Heart left ventricle (tissue), 16 donors: ENCODE measurements at regions of chr3 and their contacts with region 1.

Region 1: GRCh38 chr3:192444096-192444790 is 283.1 kb downstream of the FGF12 start:
- DNase-seq: peak; percentile 33 to 76 (median 44)
- ATAC-seq: peak; percentile 48 to 75 (median 72)
- H3K4me3 ChIP-seq: no peak overlapping the region
- H3K27ac ChIP-seq: no peak overlapping the region
- H3K4me1 ChIP-seq: peaks cover 0 to 26% (median 8%) of the 10 kb centered on the region in 12 donors
- H3K27me3 ChIP-seq: peaks cover 0 to 10% (median 0%) of the 10 kb centered on the region in 9 donors
- CTCF ChIP-seq: peak; percentile 95 to 100 (median 98)
- POLR2A ChIP-seq: no peak

Region 2: DNA sequence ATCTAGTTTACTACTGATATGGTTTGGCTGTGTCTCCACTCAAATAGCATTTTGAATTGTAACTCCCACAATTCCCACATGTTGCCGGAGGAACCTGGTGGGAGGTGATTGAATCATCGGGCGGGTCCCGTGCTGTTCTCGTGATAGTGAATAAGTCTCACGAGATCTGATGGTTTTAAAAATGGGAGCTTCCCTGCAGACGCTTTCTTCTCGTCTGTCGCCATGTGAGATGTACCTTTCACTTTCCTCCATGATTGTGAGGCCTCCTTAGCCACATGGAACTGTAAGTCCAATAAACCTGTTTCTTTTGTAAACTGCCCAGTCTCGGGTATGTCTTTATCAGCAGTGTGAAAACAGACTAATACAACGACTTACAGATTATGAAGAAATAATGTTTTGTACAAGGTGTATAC is 1018.9 kb before region 1 on chr3:
- intact Hi-C with region 1: loop called in 1 of 10 experiments (anchors 10 kb)
- DNase-seq: no peak
- ATAC-seq: no peak
- H3K4me3 ChIP-seq: peak overlapping the region in 5 of 12 donors; percentile 5 to 32 (median 11)
- H3K27ac ChIP-seq: no peak overlapping the region
- H3K4me1 ChIP-seq: no peaks in the 10 kb centered on the region
- H3K27me3 ChIP-seq: no peaks in the 10 kb centered on the region
- CTCF ChIP-seq: no peak
- POLR2A ChIP-seq: no peak

Region 3: DNA sequence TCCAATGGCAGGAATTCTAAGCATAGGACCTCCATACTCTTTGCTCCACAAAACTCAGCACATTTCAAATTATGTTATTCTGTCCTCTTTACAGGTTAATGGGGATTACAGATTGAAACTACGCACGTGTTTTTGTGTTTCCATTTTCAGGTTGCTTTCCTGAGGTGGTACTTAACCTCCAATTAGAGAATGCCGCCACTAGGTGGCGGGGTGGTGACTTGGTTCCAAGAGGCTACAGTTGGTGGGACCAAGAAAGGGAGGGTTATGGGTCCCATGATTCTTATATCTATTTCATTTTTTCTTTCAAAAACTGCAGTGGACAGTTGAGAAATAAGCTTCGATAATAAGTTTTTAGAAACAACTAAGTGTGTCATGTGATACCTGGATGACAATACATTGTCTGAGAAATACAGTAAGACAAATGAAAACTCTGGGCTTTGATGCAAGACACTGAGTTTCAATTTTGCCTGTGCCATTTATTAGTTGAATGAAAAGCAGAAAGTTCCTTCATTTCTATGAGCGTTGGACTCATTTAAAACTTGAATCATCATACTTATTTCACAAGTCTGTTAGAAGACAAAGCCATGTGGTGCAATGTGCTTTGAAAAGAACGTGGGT is 255.9 kb before region 1 on chr3:
- intact Hi-C with region 1: loop called in 7 of 10 experiments (anchors 2 to 10 kb)
- DNase-seq: peak in 4 of 5 donors; percentile 22 to 52 (median 30)
- ATAC-seq: peak in 1 of 4 donors; percentile 27
- H3K4me3 ChIP-seq: no peak overlapping the region
- H3K27ac ChIP-seq: no peak overlapping the region
- H3K4me1 ChIP-seq: peaks cover 0 to 9% (median 2%) of the 10 kb centered on the region in 12 donors
- H3K27me3 ChIP-seq: no peaks in the 10 kb centered on the region
- CTCF ChIP-seq: peak; percentile 45 to 69 (median 60)
- POLR2A ChIP-seq: no peak

Region 4: GRCh38 chr3:192409357-192409824 is 34.9 kb before region 1 on chr3:
- intact Hi-C with region 1: no loop called
- DNase-seq: peak; percentile 49 to 70 (median 59)
- ATAC-seq: peak; percentile 26 to 81 (median 68)
- H3K4me3 ChIP-seq: peak overlapping the region; percentile 41 to 75 (median 61)
- H3K27ac ChIP-seq: peak overlapping the region; percentile 20 to 81 (median 66)
- H3K4me1 ChIP-seq: peaks cover 0 to 46% (median 6%) of the 10 kb centered on the region in 12 donors
- H3K27me3 ChIP-seq: peaks cover 0 to 32% (median 0%) of the 10 kb centered on the region in 9 donors
- CTCF ChIP-seq: no peak
- POLR2A ChIP-seq: peak in 1 of 2 donors; percentile 33

Region 5: DNA sequence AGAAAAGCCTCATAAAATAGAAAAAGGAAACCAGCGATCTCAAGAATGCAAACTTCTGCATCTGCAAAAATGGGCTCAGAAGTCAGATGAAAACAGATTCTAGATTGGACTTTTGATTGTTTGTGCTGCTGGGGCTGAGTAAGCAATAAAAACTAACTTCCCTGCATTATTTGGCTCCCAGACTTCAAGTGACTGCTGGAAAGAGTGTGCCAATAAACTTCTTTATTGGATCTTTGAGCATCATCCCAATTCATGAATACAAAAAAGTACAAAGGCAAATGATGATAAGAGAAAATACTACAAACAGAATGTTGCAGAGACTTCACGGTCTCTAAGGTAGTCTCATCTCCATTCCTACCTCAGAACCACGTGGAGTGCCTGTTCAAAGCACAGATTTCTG is 185.2 kb after region 1 on chr3:
- intact Hi-C with region 1: no loop called
- DNase-seq: no peak
- ATAC-seq: no peak
- H3K4me3 ChIP-seq: no peak overlapping the region
- H3K27ac ChIP-seq: peak overlapping the region in 5 of 12 donors; percentile 6 to 25 (median 9)
- H3K4me1 ChIP-seq: peaks cover 0 to 9% (median 0%) of the 10 kb centered on the region in 12 donors
- H3K27me3 ChIP-seq: no peaks in the 10 kb centered on the region
- CTCF ChIP-seq: no peak
- POLR2A ChIP-seq: no peak